ENCODE measurements at regions of chr14 and their contacts with region 1.

Region 1: GRCh38 chr14:80954687-80955299 is 628 bp upstream of the TSHR start:
- DNase-seq: no peak
- H3K4me3 ChIP-seq: peak overlapping the region; percentile 50 to 63
- H3K27ac ChIP-seq: no peak overlapping the region
- H3K4me1 ChIP-seq: peaks cover 8% of the 10 kb centered on the region
- H3K27me3 ChIP-seq: no peaks in the 10 kb centered on the region
- CTCF ChIP-seq: peak; percentile 54 to 75 (median 60)
- POLR2A ChIP-seq: no peak

Region 2: DNA sequence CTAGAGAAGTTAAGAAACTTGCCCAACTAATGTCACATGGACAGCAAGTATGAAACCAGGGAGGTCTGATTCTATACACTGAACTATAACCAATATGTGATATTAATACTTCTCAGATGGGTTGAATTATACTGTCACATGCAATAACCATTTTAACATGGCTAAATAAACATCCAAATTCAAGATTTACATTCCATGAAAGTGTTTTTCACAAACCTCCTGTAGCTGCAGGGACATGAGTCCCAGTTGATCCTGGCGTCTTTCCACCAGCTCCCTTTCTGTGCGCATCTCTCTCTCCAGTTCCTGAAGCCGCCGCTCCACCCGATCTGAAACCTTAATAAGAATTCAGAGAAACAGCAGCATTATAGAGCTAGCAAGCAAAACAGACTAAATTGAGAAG is 92.3 kb before region 1 on chr14:
- intact Hi-C with region 1: no loop called
- DNase-seq: no peak
- H3K4me3 ChIP-seq: no peak overlapping the region
- H3K27ac ChIP-seq: no peak overlapping the region
- H3K4me1 ChIP-seq: no peaks in the 10 kb centered on the region
- H3K27me3 ChIP-seq: no peaks in the 10 kb centered on the region
- CTCF ChIP-seq: no peak
- POLR2A ChIP-seq: no peak

Region 3: DNA sequence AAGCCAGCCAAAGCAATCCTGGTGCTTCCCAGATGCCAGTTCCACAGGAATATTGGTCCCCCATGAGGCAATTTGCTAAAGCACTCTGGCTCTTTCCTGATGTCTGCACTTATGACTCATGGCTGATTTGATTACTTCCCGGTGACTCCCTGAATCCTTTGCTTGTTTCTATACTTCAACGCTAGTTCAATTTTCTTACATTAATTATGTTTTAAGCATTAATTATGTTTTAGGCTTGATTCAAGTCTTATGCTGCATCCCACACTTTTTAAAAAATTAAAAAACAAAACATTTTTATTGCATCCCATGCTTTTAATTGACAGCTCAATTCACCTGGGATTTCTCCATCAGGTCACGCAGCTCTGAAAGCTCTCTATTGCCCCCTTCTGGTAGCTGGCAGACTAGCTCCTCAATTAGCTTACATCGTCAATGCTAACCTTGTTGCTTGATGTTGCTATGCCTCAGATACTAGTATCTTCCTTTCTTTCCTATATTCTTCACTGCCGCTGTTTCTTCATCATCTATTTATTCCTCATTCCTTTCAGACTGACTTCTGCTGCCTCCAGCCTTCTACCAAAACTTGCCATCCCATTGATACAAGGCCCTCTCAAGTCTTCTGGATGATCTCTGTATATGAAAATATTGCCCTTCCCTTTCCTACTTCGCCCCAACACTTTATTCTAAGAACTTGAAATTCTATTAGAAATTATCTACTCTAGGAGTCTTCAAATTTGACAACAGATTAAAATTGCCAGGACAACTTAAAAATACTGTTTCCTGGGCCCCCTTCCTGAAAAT is 32.6 kb after region 1 on chr14:
- intact Hi-C with region 1: loop called (anchors 2 kb)
- DNase-seq: no peak
- H3K4me3 ChIP-seq: no peak overlapping the region
- H3K27ac ChIP-seq: no peak overlapping the region
- H3K4me1 ChIP-seq: no peaks in the 10 kb centered on the region
- H3K27me3 ChIP-seq: no peaks in the 10 kb centered on the region
- CTCF ChIP-seq: peak; percentile 80 to 97 (median 89)
- POLR2A ChIP-seq: no peak

Region 4: DNA sequence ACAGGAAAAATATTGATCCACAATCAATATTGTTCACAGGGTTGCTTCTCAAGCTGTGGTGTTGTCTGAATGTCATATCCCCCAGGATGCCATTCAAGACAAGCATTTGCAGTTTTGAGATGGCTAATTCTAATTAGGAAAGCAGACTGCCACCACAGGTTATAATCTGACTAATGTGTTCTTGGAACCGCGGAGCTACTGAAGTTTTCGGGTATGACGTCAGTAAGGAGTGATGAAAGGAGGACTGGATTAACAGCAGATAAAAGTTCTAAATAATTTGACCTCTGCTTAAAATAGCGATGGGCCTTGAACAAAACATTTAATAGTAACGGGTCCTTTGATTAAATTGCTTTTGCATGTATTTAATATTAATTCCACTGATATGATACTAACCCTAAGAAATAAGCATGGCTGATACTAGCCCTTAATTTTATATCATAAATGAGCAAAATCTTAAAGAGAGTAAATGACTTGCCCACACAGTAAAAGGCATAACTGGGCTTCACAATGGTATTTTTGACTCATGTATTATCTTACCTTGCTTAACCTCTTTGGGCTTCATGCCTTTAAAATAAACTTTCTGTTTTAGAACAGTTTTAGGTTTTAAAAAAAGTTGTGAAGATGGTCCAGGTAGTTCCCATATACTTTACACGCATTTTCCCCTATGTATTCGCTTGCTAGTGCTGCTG is 50.9 kb after region 1 on chr14:
- intact Hi-C with region 1: no loop called
- DNase-seq: no peak
- H3K4me3 ChIP-seq: no peak overlapping the region
- H3K27ac ChIP-seq: no peak overlapping the region
- H3K4me1 ChIP-seq: no peaks in the 10 kb centered on the region
- H3K27me3 ChIP-seq: no peaks in the 10 kb centered on the region
- CTCF ChIP-seq: no peak
- POLR2A ChIP-seq: no peak

Measured in vagina (tissue), 2 donors.